ENCODE measurements at regions of chr22 and their contacts with region 1.

Region 1: GRCh38 chr22:28800308-28801077 is at the start of gene XBP1:
- DNase-seq: peak; percentile 82 to 94 (median 88)
- ATAC-seq: peak; percentile 96
- H3K4me3 ChIP-seq: peak within 1 kb of the TSS; percentile 81
- H3K4me3 Mint-ChIP-seq: peak within 1 kb of the TSS; percentile 91 to 99 (median 95)
- H3K27ac ChIP-seq: peak within 1 kb of the TSS; percentile 99
- H3K27ac Mint-ChIP-seq: peak within 1 kb of the TSS; percentile 90 to 100 (median 99)
- H3K4me1 ChIP-seq: peaks cover 24 to 41% of the 10 kb centered on the region in 2 donors
- H3K4me1 Mint-ChIP-seq: peaks cover 26 to 63% (median 50%) of the 10 kb centered on the region in 7 donors
- H3K27me3 ChIP-seq: no peaks in the 10 kb centered on the region
- H3K27me3 Mint-ChIP-seq: no peaks in the 10 kb centered on the region
- total RNA-seq, gene XBP1: 120 to 293 (median 144) TPM

Region 2: DNA sequence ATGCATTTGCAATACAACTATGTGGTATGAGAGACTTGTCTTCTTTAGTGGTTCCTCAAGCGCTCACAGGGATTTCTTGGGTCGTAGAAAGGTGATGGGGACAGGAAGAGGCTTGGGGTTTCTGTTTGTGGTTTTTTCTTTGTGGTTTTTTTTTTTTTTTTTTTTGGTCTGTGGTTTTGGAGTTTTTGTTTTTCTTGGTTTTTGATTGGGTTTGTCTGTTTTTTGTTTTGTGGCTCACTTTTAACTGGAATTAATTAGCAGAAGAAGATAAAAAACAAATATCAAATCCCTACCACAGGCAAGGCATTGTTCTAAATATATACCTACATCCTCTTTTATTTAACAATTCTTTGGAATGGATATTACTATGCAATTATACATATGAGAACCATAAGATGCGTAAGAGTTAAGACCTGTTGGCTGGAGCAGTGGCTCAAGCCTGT is 126.4 kb before region 1 on chr22:
- CTCF ChIA-PET with region 1: no interaction called
- POLR2A ChIA-PET with region 1: no interaction called
- intact Hi-C with region 1: loop called in 1 of 2 experiments (anchors 10 kb)
- DNase-seq: peak in 7 of 9 donors; percentile 57 to 75 (median 61)
- ATAC-seq: peak; percentile 91
- H3K4me3 ChIP-seq: no peak overlapping the region
- H3K4me3 Mint-ChIP-seq: peak overlapping the region in 9 of 10 donors; percentile 70 to 95 (median 78)
- H3K27ac ChIP-seq: no peak overlapping the region
- H3K27ac Mint-ChIP-seq: peak overlapping the region; percentile 88 to 100 (median 98)
- H3K4me1 ChIP-seq: peaks cover 16 to 17% of the 10 kb centered on the region in 2 donors
- H3K4me1 Mint-ChIP-seq: peaks cover 23 to 35% (median 34%) of the 10 kb centered on the region in 7 donors
- H3K27me3 ChIP-seq: peaks cover 10 to 42% of the 10 kb centered on the region in 2 donors
- H3K27me3 Mint-ChIP-seq: peaks cover 47 to 83% (median 66%) of the 10 kb centered on the region in 5 donors

Region 3: GRCh38 chr22:28780296-28780695 is 20.2 kb before region 1 on chr22:
- CTCF ChIA-PET with region 1: no interaction called
- POLR2A ChIA-PET with region 1: interaction called, 79 read pairs
- intact Hi-C with region 1: no loop called
- DNase-seq: no peak
- ATAC-seq: no peak
- H3K4me3 ChIP-seq: no peak overlapping the region
- H3K4me3 Mint-ChIP-seq: no peak overlapping the region
- H3K27ac ChIP-seq: no peak overlapping the region
- H3K27ac Mint-ChIP-seq: peak overlapping the region in 1 of 9 donors; percentile 28
- H3K4me1 ChIP-seq: no peaks in the 10 kb centered on the region
- H3K4me1 Mint-ChIP-seq: peaks cover 14 to 59% (median 26%) of the 10 kb centered on the region in 7 donors
- H3K27me3 ChIP-seq: no peaks in the 10 kb centered on the region
- H3K27me3 Mint-ChIP-seq: no peaks in the 10 kb centered on the region

Region 4: DNA sequence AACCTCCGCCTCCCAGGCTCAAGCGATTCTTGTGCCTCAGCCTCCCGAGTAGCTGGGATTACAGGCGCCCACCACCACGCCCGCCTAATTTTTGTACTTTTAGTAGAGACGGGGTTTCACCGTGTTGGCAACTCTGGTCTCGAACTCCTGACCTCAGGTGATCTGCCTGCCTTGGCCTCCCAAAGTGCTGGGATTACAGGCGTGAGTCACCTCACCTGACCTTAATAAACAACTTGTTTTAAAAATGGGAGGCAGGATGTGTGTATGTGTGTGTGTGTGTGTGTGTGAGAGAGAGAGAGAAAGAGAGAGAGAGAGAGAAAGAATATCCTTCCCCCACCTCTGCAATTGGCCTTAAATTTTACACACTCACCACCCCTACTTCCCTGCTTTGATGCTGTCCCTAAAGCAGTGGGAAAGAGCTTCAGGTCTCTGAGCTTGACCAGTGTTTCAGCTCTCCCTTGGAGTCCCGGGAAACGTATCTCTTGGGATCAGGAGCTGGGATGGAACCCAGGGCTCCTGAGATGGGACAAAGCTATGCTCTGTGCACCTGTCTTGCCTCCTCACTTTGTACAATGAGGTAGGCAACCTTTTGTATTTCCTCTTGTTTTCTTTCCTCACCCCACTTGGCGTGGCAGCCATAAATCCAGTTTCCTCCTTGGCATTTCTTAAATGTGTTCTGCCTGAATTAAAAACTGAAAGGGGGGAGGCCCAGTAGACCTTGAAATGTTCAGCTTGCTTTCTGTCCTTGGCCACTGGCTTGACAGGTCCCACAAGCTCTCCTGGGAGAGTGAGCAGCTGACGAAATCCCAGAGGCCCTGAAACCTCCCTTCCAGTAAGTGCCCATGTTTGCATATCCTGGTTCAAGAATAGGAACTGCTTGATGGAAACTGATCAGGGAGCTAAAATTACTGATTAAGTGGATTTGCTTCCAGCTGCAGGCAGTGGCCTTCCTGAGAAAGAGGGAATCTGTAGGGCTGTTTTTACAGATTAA is 17.7 kb after region 1 on chr22:
- CTCF ChIA-PET with region 1: interaction called, 26 read pairs
- POLR2A ChIA-PET with region 1: interaction called, 194 read pairs
- intact Hi-C with region 1: loop called (anchors 1 kb)
- DNase-seq: peak in 1 of 9 donors; percentile 22
- ATAC-seq: no peak
- H3K4me3 ChIP-seq: no peak overlapping the region
- H3K4me3 Mint-ChIP-seq: peak overlapping the region in 9 of 10 donors; percentile 25 to 76 (median 63)
- H3K27ac ChIP-seq: no peak overlapping the region
- H3K27ac Mint-ChIP-seq: peak overlapping the region; percentile 32 to 92 (median 75)
- H3K4me1 ChIP-seq: peaks cover 24 to 62% of the 10 kb centered on the region in 2 donors
- H3K4me1 Mint-ChIP-seq: peaks cover 59 to 92% (median 82%) of the 10 kb centered on the region in 7 donors
- H3K27me3 ChIP-seq: no peaks in the 10 kb centered on the region
- H3K27me3 Mint-ChIP-seq: no peaks in the 10 kb centered on the region

Region 5: DNA sequence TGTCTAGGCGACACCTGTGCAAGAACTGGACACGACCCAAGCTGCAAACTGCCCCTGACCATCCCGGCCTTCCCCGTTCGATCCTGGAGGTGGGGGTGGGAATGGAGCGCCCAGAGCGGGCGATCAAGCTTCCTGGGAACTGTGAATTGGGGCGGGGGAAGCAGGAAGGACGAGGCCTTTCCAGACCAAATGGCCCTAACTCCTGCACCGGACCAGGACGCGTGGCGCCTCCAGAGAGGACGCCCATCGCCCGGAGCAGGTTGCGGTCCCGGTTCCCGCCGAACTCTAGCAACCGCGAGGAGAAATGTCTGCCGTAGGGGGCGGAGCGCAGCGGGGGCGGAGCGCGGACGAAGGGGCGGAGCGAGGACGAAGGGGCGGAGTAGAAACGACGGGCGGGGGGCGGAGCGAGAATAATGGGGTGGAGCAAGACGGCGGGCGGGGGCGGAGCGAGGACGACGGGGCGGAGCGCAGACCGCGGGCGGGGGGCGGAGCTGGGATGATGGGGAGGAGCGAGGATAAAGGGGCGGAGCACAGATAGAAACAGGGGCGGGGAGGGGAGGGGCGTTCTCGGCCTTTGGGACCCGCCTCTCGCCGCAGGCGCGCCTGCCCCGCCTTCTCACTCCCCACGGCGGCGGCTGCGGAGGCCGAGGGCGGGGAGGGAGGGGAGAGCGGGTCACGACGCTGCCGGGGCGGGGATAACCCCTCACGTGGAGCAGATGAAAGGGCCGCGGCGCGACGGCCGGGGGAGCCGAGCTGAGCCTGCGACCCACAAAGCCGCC is 82.6 kb after region 1 on chr22 and contains the start of gene ZNRF3:
- CTCF ChIA-PET with region 1: no interaction called
- POLR2A ChIA-PET with region 1: interaction called, 5 read pairs
- intact Hi-C with region 1: loop called in 1 of 2 experiments (anchors 2 kb)
- DNase-seq: peak; percentile 76 to 91 (median 87)
- ATAC-seq: peak; percentile 98
- H3K4me3 ChIP-seq: peak within 1 kb of the TSS; percentile 90
- H3K4me3 Mint-ChIP-seq: peak within 1 kb of the TSS; percentile 66 to 94 (median 88)
- H3K27ac ChIP-seq: peak within 1 kb of the TSS; percentile 15
- H3K27ac Mint-ChIP-seq: peak within 1 kb of the TSS; percentile 33 to 78 (median 62)
- H3K4me1 ChIP-seq: peaks cover 8 to 12% of the 10 kb centered on the region in 2 donors
- H3K4me1 Mint-ChIP-seq: peaks cover 13 to 29% (median 21%) of the 10 kb centered on the region in 7 donors
- H3K27me3 ChIP-seq: peaks cover 0 to 3% of the 10 kb centered on the region in 2 donors
- H3K27me3 Mint-ChIP-seq: peaks cover 8 to 72% (median 16%) of the 10 kb centered on the region in 5 donors
- total RNA-seq, gene ZNRF3: 0.59 to 0.98 (median 0.70) TPM

Region 6: GRCh38 chr22:28950617-28951411 is 150.3 kb after region 1 on chr22:
- CTCF ChIA-PET with region 1: no interaction called
- POLR2A ChIA-PET with region 1: no interaction called
- intact Hi-C with region 1: no loop called
- DNase-seq: no peak
- ATAC-seq: no peak
- H3K4me3 ChIP-seq: no peak overlapping the region
- H3K4me3 Mint-ChIP-seq: peak overlapping the region in 1 of 10 donors; percentile 5
- H3K27ac ChIP-seq: no peak overlapping the region
- H3K27ac Mint-ChIP-seq: no peak overlapping the region
- H3K4me1 ChIP-seq: peaks cover 5 to 8% of the 10 kb centered on the region in 2 donors
- H3K4me1 Mint-ChIP-seq: peaks cover 1 to 7% (median 7%) of the 10 kb centered on the region in 7 donors
- H3K27me3 ChIP-seq: peaks cover 0 to 36% of the 10 kb centered on the region in 2 donors
- H3K27me3 Mint-ChIP-seq: peaks cover 74 to 91% (median 83%) of the 10 kb centered on the region in 5 donors